AG04450 (cell line): ENCODE measurements at regions of chr20 and their contacts with region 1.

Region 1: DNA sequence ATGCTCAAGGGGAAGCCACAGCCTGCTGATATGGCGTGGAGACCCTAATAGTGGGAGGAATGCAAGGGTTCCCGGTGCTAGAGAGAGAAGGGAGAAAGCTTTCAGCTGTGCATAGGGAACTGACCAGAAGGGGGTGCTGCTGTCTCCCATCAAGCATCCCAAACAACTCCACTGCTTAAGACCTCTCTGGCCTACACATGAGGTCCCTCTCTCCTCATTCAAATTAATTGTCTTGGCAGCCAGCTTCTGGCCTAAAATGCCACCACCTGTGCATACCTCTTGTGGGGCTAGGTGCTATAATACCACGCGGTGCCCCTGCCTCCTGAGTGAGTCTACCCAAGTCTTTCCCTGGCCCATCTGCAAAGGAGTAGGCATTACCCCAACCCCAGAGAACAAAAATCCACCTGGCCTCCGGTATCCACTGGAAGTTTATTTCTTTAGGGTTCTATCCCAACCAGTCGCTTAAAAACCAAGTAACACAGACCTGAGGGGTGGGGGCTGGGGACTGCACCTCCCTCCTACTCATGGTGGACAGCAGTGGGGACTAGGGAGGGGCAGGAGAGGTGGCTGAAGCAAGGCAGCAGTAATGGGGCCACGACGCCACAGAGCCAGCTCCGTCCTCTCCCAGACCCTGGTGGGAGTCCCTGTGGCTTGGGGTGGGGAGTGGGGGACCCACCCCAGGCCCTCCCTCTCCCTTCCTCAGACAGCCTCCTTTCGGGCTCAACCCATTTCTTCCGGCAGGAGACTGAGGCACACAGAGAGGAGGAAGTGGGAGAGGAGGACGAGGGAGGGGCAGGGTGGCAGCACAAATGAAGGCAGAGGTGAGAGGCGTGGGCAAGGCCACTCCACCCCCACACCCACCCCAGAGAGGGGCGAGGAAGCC is 14.2 kb downstream of the ADISSP start:
- DNase-seq: peak; percentile 43
- H3K4me3 ChIP-seq: no peak overlapping the region
- H3K27ac ChIP-seq: peak overlapping the region; percentile 21
- H3K27me3 ChIP-seq: no peaks in the 10 kb centered on the region
- CTCF ChIP-seq: peak; percentile 85

Region 2: GRCh38 chr20:3616250-3616649 is 137.1 kb before region 1 on chr20:
- CTCF ChIA-PET with region 1: no interaction called
- POLR2A ChIA-PET with region 1: no interaction called
- DNase-seq: peak; percentile 16
- H3K4me3 ChIP-seq: no peak overlapping the region
- H3K27ac ChIP-seq: peak overlapping the region; percentile 50
- H3K27me3 ChIP-seq: no peaks in the 10 kb centered on the region
- CTCF ChIP-seq: no peak

Region 3: DNA sequence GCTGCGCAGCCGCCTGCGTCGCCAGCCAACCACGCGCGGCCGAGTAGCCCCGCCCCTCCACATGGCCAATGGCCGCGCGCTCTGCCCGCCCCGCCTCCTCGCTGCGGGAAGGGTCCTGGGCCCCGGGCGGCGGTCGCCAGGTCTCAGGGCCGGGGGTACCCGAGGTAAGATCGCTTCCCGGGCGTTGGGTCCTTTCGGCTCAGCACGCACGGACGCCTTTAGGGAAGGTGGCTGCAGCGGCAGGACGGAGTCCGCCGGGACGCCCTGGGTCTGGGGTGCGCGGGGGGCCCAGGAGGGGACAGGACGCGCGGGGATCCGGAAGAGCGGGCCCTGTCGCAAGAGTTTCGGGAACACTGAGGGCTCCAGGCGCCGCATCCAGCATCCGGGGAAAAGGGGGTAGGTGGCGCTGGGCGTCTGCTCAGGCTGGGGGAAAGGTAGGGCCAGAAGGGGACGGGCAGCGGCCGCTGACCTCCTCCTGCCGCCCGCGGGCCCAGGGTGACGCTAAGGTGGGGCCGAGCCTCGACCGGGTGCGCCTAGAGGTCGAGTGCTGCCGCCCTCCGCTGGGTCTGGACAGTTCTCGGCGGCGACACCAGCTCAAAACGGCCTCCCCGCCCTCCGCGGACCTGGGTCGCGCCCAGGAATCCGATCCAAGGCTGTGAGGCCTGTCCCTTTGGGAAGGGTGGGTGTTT is 93.5 kb after region 1 on chr20 and contains the start of gene MAVS:
- CTCF ChIA-PET with region 1: interaction called, 3 read pairs
- POLR2A ChIA-PET with region 1: interaction called, 11 read pairs
- DNase-seq: peak; percentile 24
- H3K4me3 ChIP-seq: peak within 1 kb of the TSS; percentile 83
- H3K27ac ChIP-seq: peak within 1 kb of the TSS; percentile 21
- H3K27me3 ChIP-seq: no peaks in the 10 kb centered on the region
- CTCF ChIP-seq: no peak
- polyA plus RNA-seq, gene MAVS: 16.4 and 18.2 TPM in 2 replicates